Transverse colon (tissue), 4 donors: ENCODE measurements at regions of chr7 and their contacts with region 1.

Region 1: GRCh38 chr7:37833107-37833817 is 15.1 kb upstream of the NME8 start:
- DNase-seq: peak; percentile 32
- H3K4me3 ChIP-seq: peak overlapping the region in 1 of 4 donors; percentile 39
- H3K27ac ChIP-seq: no peak overlapping the region
- H3K4me1 ChIP-seq: peaks cover 0 to 8% (median 2%) of the 10 kb centered on the region in 4 donors
- H3K27me3 ChIP-seq: no peaks in the 10 kb centered on the region
- CTCF ChIP-seq: peak; percentile 53 to 77 (median 63)
- EP300 ChIP-seq: no peak
- POLR2A ChIP-seq: no peak

Region 2: DNA sequence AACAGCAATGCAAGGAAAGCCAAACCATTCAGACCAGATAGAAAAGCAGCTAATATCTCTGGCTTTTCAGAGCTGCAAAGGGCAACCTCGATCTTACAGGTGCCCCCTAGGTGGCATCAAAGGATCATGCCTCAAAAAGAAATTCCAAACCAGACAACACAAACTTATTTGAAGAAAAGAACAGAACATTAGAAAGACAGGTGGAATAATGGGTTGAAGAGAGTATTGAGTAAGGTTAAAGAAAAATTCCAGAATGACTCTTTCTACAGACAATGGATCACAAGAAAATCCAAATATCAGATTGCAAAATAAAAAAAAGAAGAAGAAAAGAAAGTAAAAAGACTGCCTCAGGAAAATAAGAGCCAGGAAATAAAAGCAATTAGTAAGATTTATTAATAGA is 598.3 kb before region 1 on chr7:
- in situ Hi-C with region 1: loop called in 3 of 4 experiments (anchors 25 kb)
- intact Hi-C with region 1: no loop called
- DNase-seq: no peak
- H3K4me3 ChIP-seq: no peak overlapping the region
- H3K27ac ChIP-seq: no peak overlapping the region
- H3K4me1 ChIP-seq: no peaks in the 10 kb centered on the region
- H3K27me3 ChIP-seq: no peaks in the 10 kb centered on the region
- CTCF ChIP-seq: peak; percentile 33 to 43 (median 35)
- EP300 ChIP-seq: no peak
- POLR2A ChIP-seq: no peak

Region 3: GRCh38 chr7:37806152-37806551 is 27.1 kb before region 1 on chr7:
- in situ Hi-C with region 1: no loop called
- intact Hi-C with region 1: no loop called
- DNase-seq: no peak
- H3K4me3 ChIP-seq: no peak overlapping the region
- H3K27ac ChIP-seq: no peak overlapping the region
- H3K4me1 ChIP-seq: no peaks in the 10 kb centered on the region
- H3K27me3 ChIP-seq: no peaks in the 10 kb centered on the region
- CTCF ChIP-seq: no peak
- EP300 ChIP-seq: no peak
- POLR2A ChIP-seq: no peak

Region 4: GRCh38 chr7:38335492-38336147 is 502.4 kb after region 1 on chr7:
- in situ Hi-C with region 1: no loop called
- intact Hi-C with region 1: no loop called
- DNase-seq: peak; percentile 89
- H3K4me3 ChIP-seq: peak overlapping the region in 1 of 4 donors; percentile 17
- H3K27ac ChIP-seq: peak overlapping the region; percentile 35 to 58 (median 44)
- H3K4me1 ChIP-seq: peaks cover 0 to 11% (median 0%) of the 10 kb centered on the region in 4 donors
- H3K27me3 ChIP-seq: no peaks in the 10 kb centered on the region
- CTCF ChIP-seq: peak; percentile 72 to 87 (median 80)
- EP300 ChIP-seq: no peak
- POLR2A ChIP-seq: no peak